Lower leg skin (tissue), 4 donors: ENCODE measurements at regions of chr13 and their contacts with region 1.

Region 1: GRCh38 chr13:100514788-100515409 is 73.7 kb downstream of the GGACT start:
- DNase-seq: peak; percentile 62 to 95
- H3K4me3 ChIP-seq: no peak overlapping the region
- CTCF ChIP-seq: no peak
- POLR2A ChIP-seq: no peak

Region 2: GRCh38 chr13:99656092-99656745 is 858.7 kb before region 1 on chr13:
- intact Hi-C with region 1: loop called (anchors 10 kb)
- DNase-seq: peak; percentile 75 to 93
- H3K4me3 ChIP-seq: no peak overlapping the region
- CTCF ChIP-seq: peak in 1 of 3 donors; percentile 91
- POLR2A ChIP-seq: no peak